Posterior cingulate gyrus (tissue), 11 donors: ENCODE measurements at regions of chr9 and their contacts with region 1.

Region 1: DNA sequence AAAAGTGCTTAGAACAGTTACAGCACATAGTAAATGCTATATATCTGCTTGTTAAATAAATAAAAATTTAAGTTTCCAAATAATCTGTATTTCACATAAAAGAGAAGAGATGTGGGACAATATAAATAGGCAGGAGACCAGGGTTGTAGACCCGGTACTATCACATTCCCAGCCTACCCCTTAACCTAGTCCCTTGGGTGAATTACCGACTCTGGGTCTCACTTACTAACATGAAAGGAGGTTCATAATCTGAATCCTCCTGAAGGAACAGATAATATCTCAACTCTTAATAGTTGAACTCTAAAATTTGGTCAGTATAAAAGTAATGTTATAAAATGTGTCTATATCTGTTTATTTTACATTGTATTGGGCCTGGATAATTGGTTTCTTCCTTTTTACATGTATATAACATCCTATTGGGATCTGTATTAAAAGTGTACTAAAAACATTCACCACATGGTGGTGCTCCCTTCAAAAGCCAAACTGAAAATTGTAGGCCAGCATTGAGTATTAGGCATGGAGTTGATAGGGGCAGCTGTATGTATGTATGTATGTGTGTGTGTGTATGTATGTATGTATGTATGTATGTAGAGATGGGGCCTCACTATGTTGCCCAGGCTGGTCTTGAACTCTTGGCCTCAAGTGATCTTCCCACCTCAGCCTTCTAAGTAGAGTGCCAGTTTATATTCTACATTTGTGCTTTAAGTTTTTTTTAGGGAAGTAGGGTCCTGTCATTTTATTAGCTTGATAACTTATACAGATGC is 64.2 kb upstream of the ABL1 start:
- DNase-seq: no peak

Region 2: DNA sequence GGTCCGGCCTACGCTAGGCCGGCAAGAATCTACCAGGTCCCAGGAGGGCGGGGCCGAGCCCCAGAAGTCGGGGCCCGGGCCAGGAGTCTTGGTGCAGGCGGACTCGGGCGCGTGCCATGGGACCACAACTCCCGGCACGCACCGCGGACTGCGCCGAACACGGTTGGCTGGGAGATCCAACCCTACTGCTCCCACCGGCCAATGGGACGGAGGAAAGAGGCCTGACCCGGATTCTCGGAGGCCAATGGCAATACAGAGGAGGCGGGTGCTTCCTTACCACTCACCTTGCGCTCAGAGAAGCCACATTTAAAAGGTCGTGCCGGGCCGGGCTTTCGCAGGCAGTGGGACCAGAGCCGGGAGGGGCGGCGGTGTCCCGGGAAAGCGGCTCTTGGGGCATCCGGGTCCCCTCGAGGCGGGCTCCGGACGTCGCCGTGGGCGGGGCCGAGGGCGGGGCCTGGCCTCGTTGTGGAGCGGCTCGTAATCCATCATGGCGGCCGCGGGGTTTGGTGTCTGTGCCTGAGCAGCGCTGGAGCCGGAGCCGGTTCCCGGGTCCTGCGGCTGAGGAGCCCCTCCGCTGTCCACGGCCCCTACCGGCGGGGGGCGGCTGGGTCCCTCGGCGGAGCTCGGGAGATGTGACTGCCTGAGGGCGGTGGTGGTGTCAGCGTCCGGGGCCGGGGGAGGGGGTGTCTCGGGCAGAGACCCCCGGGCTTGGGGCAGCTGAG is 58.1 kb before region 1 on chr9:
- intact Hi-C with region 1: loop called (anchors 10 kb)
- DNase-seq: peak; percentile 95 to 100 (median 98)

Region 3: DNA sequence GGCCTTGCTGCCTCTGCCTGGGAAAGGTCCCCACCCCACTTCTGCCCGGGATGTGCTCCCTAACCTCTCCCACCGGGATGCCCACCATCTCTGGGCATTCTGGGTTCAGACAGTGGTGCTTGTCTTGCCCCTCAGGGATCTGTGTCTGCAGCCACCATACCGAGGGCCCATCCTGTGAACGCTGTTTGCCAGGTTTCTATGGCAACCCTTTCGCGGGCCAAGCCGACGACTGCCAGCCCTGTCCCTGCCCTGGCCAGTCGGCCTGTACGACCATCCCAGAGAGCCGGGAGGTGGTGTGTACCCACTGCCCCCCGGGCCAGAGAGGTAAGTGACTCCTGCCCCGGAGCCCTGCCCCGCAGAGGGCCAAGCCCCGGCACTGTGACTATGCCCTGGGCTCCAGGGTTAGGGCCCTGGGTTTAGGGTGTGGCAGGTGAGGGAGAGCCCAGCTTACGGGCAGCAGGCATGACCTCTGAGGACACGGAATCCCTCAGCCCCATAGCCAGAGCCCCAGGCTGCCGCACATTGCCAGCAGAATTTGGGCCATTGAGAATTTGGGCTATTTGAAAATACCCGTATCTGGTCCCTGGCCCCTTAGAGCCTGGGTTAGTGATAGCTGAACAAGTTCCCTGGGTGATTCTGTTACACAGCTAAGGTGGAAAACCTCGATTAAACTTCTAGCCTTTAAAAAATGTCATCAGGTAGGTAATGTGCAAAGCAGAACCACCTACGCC is 290.2 kb after region 1 on chr9:
- intact Hi-C with region 1: no loop called
- DNase-seq: no peak

Region 4: GRCh38 chr9:131096269-131097125 is 325.6 kb after region 1 on chr9 and contains the start of gene AIF1L:
- intact Hi-C with region 1: no loop called
- DNase-seq: peak; percentile 40 to 96 (median 69)